ENCODE measurements at regions of chr11 and their contacts with region 1.

Region 1: DNA sequence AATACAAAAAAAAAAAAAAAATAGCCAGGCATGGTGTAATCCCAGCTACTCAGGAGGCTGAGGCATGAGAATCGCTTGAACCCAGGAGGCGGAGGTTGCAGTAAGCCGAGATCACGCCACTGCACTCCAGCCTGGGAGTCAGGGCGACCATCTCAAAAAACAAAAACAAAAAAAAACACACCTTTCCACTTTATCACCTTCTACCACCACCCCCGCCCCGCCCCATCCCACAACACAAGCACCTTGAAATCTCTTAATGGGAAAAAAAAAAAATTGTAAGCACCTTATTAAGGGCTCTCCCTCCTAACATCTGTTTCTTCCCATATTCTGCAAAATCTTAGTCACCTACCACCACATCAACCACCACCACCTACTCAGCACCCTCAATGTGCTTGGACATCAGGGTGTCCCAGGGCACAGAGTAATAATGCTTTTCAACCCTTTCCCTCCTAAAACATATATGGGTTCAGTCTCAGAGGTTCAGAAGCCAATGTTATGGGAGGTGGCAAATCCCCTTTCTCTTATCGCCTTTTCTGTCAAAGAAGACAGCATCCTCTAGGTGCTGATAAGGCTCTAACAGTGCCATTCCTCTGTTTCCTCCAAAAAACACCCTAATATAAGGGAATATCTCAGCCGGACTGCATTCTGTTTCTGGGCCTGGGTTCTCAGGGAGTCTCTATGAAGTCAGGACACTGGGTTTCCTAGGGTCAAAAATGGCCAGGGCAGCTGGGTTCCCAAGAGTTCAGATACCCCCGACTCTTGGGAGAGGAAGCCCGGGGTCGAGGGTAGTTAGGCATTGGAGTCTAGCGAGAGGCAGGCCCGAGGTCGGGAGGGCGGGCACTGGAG is 718 bp downstream of the INTS5 start:
- DNase-seq: peak in 2 of 3 donors; percentile 7 to 13
- H3K4me3 ChIP-seq: peak overlapping the region; percentile 81 to 97 (median 94)
- H3K27ac ChIP-seq: peak overlapping the region; percentile 89 to 94
- H3K4me1 ChIP-seq: peaks cover 0 to 21% (median 14%) of the 10 kb centered on the region in 4 experiments
- H3K27me3 ChIP-seq: no peaks in the 10 kb centered on the region

Region 2: GRCh38 chr11:62604460-62605121 is 47.8 kb before region 1 on chr11:
- CTCF ChIA-PET with region 1: no interaction called
- POLR2A ChIA-PET with region 1: no interaction called
- DNase-seq: no peak
- H3K4me3 ChIP-seq: no peak overlapping the region
- H3K27ac ChIP-seq: no peak overlapping the region
- H3K4me1 ChIP-seq: peaks cover 10 to 48% (median 33%) of the 10 kb centered on the region in 4 experiments
- H3K27me3 ChIP-seq: no peaks in the 10 kb centered on the region

Region 3: DNA sequence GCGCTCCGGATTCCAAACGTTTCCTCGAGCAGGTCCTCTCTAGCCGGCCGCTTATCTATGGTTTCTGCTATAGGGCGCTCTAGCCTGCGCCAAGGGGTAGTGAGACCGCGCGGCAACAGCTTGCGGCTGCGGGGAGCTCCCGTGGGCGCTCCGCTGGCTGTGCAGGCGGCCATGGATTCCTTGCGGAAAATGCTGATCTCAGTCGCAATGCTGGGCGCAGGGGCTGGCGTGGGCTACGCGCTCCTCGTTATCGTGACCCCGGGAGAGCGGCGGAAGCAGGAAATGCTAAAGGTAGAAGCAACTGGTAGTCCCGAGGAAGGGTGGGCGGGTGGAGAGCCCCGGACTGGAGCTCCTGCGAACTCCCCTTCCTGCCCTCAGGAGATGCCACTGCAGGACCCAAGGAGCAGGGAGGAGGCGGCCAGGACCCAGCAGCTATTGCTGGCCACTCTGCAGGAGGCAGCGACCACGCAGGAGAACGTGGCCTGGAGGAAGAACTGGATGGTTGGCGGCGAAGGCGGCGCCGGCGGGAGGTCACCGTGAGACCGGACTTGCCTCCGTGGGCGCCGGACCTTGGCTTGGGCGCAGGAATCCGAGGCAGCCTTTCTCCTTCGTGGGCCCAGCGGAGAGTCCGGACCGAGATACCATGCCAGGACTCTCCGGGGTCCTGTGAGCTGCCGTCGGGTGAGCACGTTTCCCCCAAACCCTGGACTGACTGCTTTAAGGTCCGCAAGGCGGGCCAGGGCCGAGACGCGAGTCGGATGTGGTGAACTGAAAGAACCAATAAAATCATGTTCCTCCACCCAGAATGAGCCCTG is 19.4 kb after region 1 on chr11 and contains the starts of genes LBHD1 and UQCC3:
- CTCF ChIA-PET with region 1: interaction called, 33 read pairs
- POLR2A ChIA-PET with region 1: interaction called, 16 read pairs
- DNase-seq: peak; percentile 92 to 96 (median 94)
- H3K4me3 ChIP-seq: peak within 1 kb of the TSS; percentile 82 to 100 (median 94)
- H3K27ac ChIP-seq: peak within 1 kb of the TSS; percentile 84 to 89
- H3K4me1 ChIP-seq: peaks cover 0 to 49% (median 31%) of the 10 kb centered on the region in 4 experiments
- H3K27me3 ChIP-seq: no peaks in the 10 kb centered on the region

Measured in common myeloid progenitor, CD34-positive (primary cell).